Cardiac septum (tissue), 1 donor: ENCODE measurements at regions of chr1 and their contacts with region 1.

Region 1: GRCh38 chr1:201229771-201230635 is 39.4 kb downstream of the IGFN1 start:
- DNase-seq: no peak

Region 2: DNA sequence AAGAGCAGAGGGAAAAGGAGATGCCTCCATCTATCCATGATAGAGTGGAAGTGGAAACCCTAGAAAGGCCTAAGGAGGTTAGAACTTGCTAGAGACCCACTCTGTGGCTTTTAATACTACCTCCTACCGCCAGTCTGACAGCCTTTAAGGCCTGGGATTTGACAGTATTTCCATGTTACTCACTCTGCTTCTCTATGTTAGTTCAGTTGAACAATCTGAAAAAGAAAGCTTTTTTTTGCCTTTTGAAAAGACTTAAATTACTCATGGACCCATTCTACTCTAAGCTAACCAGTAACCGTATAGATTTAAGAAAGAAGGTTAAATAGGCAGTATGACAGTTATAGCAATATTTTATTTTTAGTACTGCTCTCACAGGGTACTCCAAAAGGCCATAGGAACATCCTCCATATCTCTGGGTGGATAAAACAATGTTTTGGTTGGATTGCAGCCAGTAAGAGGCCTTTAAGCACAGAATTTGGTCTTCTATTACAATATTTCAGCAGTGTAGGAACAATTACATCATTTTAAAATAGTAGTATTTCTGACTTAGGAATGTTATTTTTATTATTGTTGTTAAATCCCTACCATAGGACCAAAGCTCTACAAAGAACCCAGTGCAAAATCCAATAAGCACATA is 373.2 kb before region 1 on chr1:
- intact Hi-C with region 1: no loop called
- DNase-seq: no peak

Region 3: DNA sequence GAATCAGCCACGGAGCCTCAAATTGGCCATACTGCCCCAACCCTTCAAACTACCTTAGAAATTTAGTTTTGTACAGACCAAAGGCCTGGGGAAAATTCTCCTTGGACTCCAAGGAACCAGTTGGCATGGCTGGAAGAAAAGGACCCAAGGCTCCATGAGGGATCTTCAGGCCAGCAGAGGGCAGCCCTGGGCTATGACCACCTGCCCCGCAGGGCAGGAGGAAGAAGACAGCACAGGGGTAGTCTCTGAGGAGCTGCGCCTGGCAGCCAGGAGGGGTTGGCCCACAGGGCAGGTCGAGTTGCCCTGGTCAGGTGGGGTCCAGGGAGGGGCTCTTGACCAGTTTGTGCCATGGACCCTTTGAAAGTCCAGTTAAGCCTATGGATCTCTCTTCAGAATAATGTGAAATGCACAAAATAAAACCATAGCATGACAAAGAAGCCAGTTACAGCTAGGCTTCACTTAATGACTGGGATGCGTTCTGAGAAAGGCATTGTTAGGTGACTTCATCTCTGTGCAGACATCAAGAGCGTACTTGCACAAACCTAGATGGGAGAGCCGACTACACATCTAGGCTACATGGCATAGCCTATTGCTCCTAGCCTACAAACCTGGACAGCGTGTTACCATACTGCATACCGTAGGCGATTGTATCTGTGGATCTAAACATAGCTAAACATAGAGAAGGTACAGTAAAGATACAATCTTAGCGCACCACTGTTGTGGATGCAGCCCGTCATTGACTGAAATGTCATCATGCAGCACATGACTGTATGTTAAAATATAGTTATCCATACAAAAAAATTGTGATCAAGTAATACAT is 143.9 kb before region 1 on chr1:
- intact Hi-C with region 1: loop called (anchors 10 kb)
- DNase-seq: no peak